ENCODE measurements at regions of chr2 and their contacts with region 1.

Region 1: DNA sequence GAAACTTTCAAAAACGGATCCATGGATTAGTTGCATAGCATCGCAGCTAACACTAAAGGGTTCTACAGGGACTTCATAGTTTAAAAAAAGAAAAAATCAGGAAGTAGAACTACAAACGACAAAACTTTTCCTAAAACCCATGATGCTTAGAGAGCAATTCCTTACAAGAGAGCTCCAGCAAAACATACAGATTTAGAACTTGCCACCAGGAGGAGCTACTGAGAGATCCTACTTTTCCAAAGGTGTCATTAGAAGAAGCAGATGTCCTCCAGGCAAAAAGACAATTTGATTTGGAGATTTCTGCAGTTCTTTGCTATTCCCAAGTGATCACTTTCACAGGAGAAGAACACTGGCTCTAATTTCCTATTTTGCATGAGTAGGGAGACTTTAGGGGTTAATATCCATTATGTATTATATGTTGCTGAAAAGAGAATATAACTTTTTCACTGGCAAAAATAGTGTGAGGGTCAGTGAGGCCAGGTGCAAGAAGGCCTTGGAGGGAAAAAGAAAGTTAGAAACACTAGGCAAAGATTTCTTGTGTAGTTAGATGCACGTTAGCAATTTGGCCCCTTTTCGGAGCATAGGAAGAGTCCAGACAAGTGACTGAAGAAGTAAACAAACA is 436.2 kb downstream of the SUCLG1 start:
- DNase-seq: peak; percentile 24
- CTCF ChIP-seq: peak; percentile 50

Region 2: GRCh38 chr2:84152462-84152861 is 129.5 kb after region 1 on chr2:
- CTCF ChIA-PET with region 1: no interaction called
- POLR2A ChIA-PET with region 1: no interaction called
- DNase-seq: no peak
- CTCF ChIP-seq: no peak

Region 3: GRCh38 chr2:84302513-84303412 is 279.8 kb after region 1 on chr2:
- CTCF ChIA-PET with region 1: interaction called, 10 read pairs
- POLR2A ChIA-PET with region 1: no interaction called
- DNase-seq: peak; percentile 66
- CTCF ChIP-seq: peak; percentile 84